Activated naive CD8-positive, alpha-beta T cell treated with anti-CD3 and anti-CD28 coated beads, Interleukin-2, amount 10 ng/mL, durations not matched to agents 7 days and 5 days (primary cell): ENCODE measurements at regions of chr22 and their contacts with region 1.

Region 1: GRCh38 chr22:28772633-28773460 is at the start of gene CCDC117:
- DNase-seq: peak; percentile 92
- ATAC-seq: peak; percentile 93
- H3K4me3 Mint-ChIP-seq: peak within 1 kb of the TSS; percentile 99
- H3K27ac Mint-ChIP-seq: peak within 1 kb of the TSS; percentile 98
- H3K4me1 Mint-ChIP-seq: peaks cover 25% of the 10 kb centered on the region
- H3K27me3 Mint-ChIP-seq: no peaks in the 10 kb centered on the region
- total RNA-seq, gene CCDC117: 27.8 to 28.0 TPM

Region 2: DNA sequence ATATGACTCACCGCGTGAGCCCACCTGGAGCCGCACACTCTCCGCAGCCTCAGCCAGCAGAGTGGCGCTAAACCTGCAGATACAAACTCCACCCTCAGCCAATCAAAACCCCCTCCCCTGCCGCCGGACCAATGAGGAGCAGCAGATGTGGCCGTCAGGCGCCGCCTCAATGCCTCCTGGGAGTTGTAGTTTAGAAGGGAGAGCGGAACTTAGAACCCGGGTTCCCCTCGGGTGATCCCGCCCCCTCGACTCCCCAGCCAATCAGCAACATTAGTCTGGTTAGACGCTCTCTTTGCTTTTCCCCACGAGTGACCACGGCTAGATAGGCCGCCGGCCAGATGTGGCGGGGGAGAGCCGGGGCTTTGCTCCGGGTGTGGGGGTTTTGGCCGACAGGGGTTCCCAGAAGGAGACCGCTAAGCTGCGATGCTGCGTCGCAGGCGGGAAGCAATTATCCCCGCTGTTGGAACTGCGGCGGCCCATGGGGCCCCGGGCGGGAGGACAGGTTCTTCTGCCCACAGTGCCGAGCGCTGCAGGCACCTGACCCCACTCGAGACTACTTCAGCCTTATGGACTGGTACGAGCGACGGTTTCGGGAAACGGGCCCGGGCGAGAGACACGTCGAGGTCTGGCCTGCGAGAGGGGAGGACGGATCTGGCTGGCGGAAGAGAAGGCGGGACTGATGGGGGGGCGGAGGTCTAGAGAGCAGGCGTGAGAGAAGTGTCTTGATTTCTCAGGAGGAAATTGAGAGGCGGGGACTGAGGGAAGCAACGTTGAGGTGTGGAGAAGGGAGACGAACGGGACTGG is 30.9 kb before region 1 on chr22 and contains the starts of genes CHEK2 and HSCB:
- POLR2A ChIA-PET with region 1: interaction called, 21 read pairs
- DNase-seq: peak; percentile 91
- ATAC-seq: peak; percentile 86
- H3K4me3 Mint-ChIP-seq: peak within 1 kb of the TSS; percentile 89
- H3K27ac Mint-ChIP-seq: peak within 1 kb of the TSS; percentile 76
- H3K4me1 Mint-ChIP-seq: peaks cover 32% of the 10 kb centered on the region
- H3K27me3 Mint-ChIP-seq: no peaks in the 10 kb centered on the region
- total RNA-seq, gene CHEK2: 33.6 to 36.7 TPM
- total RNA-seq, gene HSCB: 15.1 to 18.1 TPM

Region 3: GRCh38 chr22:28750471-28750881 is 22.4 kb before region 1 on chr22:
- POLR2A ChIA-PET with region 1: interaction called, 13 read pairs
- DNase-seq: no peak
- ATAC-seq: no peak
- H3K4me3 Mint-ChIP-seq: no peak overlapping the region
- H3K27ac Mint-ChIP-seq: no peak overlapping the region
- H3K4me1 Mint-ChIP-seq: peaks cover 23% of the 10 kb centered on the region
- H3K27me3 Mint-ChIP-seq: no peaks in the 10 kb centered on the region

Region 4: DNA sequence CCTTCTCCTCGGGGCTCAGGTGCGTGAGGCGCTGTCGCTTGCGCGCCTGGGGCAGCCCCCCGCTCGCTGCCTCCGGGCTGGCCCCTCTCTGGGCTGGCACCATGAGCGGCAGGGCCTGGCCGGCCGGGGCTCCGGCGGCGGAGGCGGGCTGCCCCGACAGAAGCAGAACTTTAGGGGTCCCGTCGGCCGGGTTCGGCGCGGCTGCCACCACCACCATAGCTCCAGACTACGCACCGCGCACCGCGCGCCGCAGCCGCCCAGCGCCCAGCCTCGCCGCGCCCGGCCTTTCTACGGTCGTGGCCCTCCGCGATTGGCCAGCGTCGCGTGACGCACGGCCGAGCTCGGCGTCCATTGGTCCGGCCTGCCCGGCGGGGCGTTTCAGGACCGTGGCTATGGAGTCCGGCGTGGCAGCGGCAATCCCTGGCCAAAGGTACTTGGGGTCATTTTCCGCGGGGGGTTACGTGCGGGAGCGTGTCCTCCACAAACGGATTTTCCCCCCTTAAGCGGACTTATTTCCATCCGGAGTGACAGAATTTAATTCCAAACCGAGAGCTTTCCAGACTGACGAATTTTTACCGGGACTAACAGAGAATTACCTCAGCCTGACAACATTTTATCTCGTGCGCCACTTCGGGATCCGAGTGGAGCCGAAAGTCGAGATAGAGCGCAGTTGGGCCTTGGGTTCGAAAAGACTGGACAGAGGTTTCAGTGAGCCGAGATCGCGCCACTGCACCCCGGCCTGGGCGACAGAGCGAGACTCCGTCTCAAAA is 27.6 kb after region 1 on chr22 and contains the start of gene XBP1:
- POLR2A ChIA-PET with region 1: interaction called, 28 read pairs
- DNase-seq: peak; percentile 94
- ATAC-seq: peak; percentile 94
- H3K4me3 Mint-ChIP-seq: peak within 1 kb of the TSS; percentile 99
- H3K27ac Mint-ChIP-seq: peak within 1 kb of the TSS; percentile 97
- H3K4me1 Mint-ChIP-seq: peaks cover 39% of the 10 kb centered on the region
- H3K27me3 Mint-ChIP-seq: no peaks in the 10 kb centered on the region
- total RNA-seq, gene XBP1: 178 to 179 TPM

Region 5: DNA sequence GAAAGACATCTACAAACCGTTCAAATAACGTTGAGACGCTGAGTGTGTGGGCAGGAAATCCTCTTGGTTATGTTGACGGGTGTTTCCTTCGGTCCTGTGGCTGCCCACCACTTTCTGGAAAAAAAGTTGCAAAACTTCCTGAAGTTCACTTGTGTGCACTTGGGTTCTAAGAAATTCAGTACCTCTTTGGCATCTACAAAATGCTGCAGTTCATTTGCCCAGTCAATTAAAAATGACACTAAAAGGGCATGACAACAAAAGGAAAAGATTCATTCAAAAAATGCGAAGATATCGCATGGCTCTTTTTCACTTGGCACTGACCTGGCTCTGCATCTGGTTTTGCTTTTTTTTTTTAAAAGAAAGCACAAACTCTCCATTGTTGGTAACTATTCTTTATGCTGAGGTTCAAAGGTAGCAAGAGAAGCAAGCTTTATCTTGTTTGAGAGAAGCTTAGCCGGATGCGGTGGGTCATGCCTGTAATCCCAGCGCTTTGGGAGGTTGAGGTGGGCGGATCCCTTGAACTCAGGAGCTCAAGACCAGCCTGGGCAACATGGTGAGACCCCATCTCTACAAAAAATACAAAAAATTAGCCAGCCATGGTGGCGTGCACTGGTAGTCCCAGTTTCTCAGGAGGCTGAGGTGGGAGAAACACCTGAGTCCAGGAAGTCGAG is 38.1 kb after region 1 on chr22:
- POLR2A ChIA-PET with region 1: interaction called, 11 read pairs
- DNase-seq: peak; percentile 53
- ATAC-seq: peak; percentile 42
- H3K4me3 Mint-ChIP-seq: peak overlapping the region; percentile 75
- H3K27ac Mint-ChIP-seq: peak overlapping the region; percentile 95
- H3K4me1 Mint-ChIP-seq: peaks cover 67% of the 10 kb centered on the region
- H3K27me3 Mint-ChIP-seq: peaks cover 2% of the 10 kb centered on the region